GM10248 (cell line): ENCODE measurements at regions of chr13 and their contacts with region 1.

Region 1: GRCh38 chr13:19984430-19985218 is 26.1 kb downstream of the ZMYM2 start:
- DNase-seq: peak; percentile 65
- CTCF ChIP-seq: peak; percentile 46

Region 2: DNA sequence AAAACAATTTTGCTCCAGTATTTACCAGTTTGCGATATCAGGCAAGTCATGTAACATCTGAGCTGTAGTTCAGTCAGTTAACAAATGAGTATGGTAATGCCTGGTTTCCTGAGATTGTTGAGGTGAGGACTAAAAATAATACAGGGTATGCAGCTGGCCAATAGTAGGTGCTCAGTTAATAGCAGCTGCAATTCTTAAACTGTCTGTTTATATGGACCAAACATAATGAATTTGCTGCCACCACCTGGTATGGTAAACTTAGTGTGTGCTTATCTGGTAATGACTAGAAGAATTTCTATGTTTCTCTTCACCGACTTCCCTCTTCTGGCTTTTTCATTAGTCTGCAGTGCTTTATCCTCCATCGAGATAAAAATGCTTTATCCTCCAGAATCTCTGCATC is 17.0 kb before region 1 on chr13:
- CTCF ChIA-PET with region 1: interaction called, 18 read pairs
- POLR2A ChIA-PET with region 1: no interaction called
- DNase-seq: no peak
- CTCF ChIP-seq: no peak

Region 3: DNA sequence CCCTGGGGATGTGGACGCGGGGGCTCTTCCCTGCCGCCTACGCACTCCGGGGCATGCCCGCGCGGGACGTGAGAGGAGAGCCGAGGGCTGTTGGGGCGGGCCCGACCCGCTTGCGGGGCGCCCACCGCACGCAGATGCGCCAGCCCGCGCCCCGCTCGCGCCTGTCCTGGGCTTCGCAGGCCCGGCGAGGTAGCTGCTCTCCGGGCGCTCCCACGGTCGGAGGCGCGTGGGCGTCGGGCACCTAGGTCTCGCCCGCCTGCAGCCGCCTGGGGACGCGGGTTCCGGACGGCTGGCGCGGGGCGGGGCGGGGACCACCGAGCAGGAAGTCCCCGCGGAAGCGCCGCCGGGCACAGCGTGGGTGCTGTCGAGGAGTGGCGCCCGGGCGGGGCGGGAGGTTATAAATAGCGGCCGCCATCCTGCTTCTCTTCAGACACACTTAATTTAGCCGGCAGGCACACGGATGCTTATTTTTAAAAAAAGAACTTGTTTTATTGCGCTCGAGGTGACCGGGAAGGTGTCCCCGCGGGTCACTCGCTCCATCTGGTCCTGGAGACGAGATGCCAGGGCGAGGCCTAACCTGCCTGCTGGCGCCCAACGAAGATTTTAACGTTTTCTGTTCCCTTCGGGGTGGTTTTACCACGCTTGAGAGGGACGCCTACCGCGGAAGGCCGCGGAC is 176.8 kb after region 1 on chr13:
- CTCF ChIA-PET with region 1: interaction called, 14 read pairs
- POLR2A ChIA-PET with region 1: no interaction called
- DNase-seq: peak; percentile 53
- CTCF ChIP-seq: no peak